ENCODE measurements at regions of chr3 and their contacts with region 1.

Region 1: DNA sequence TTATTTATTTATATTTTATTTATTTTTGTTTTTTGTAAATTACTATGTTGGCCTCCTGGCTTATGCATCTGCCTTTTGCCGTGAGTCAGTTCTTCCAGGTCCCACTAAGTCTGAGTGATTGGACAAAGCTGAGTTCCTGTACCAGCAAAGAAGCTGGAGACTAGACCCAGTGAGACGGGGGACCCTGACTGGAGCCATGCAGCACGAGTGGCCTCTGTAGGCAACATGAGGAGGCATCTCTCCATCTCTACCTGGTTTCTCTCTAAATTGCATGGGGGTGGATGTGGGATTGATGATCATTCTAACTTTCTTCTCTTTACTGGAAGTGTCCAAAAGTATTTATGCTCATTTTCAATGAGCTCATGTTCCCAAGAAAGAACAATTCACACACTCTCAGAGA is 155.3 kb upstream of the MRPL3 start:
- DNase-seq: no peak
- ATAC-seq: no peak
- H3K4me3 ChIP-seq: no peak overlapping the region
- H3K27ac ChIP-seq: no peak overlapping the region
- H3K4me1 ChIP-seq: no peaks in the 10 kb centered on the region
- H3K27me3 ChIP-seq: no peaks in the 10 kb centered on the region

Region 2: GRCh38 chr3:131582438-131582837 is 75.7 kb before region 1 on chr3:
- intact Hi-C with region 1: no loop called
- DNase-seq: no peak
- ATAC-seq: no peak
- H3K4me3 ChIP-seq: no peak overlapping the region
- H3K27ac ChIP-seq: no peak overlapping the region
- H3K4me1 ChIP-seq: no peaks in the 10 kb centered on the region
- H3K27me3 ChIP-seq: no peaks in the 10 kb centered on the region

Region 3: DNA sequence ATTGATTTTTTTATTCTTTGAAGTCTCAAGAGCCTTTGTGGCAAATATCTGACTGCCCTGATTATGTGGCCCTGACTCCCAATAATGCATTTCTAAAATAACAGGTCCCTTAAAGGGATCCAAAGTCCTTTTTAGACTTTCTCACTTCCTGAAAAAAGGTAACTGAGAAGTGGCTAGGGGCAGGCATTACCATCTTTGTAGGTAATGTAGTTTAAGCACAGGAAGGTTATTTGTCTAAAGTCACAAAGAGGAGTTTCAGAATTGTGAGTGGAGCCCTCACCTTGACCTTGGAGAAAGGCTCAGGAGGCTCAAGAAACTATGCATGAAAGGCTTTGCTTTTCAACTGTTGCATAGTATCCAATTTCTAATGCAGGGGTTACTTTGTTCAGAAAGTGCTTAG is 12.5 kb before region 1 on chr3:
- intact Hi-C with region 1: loop called in 1 of 2 experiments (anchors 2 kb)
- DNase-seq: no peak
- ATAC-seq: no peak
- H3K4me3 ChIP-seq: no peak overlapping the region
- H3K27ac ChIP-seq: no peak overlapping the region
- H3K4me1 ChIP-seq: no peaks in the 10 kb centered on the region
- H3K27me3 ChIP-seq: no peaks in the 10 kb centered on the region

Region 4: DNA sequence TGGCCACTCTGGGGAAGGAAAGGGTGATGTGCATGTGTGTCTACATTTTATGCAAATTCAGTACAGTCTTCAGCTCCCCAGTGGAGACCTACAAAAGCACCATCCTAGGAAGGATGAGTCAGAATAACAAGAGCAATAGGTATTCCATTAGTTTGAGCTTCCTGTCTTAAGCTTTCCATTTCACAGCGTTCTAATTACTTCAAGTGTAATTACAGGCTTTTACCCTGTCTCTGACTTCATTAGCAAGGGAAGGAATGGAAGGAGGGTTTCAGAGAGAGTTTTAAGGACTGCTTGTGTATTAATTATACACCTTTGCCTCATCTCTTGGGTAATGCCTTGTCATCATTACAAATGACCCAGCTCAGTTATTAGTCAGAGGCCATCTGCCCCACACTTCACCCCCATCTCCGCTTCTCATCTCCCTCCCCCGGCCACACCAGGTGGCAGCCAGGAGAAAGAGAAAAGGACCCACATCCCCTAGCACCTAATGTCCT is 47.5 kb after region 1 on chr3:
- intact Hi-C with region 1: no loop called
- DNase-seq: no peak
- ATAC-seq: no peak
- H3K4me3 ChIP-seq: no peak overlapping the region
- H3K27ac ChIP-seq: no peak overlapping the region
- H3K4me1 ChIP-seq: no peaks in the 10 kb centered on the region
- H3K27me3 ChIP-seq: no peaks in the 10 kb centered on the region

Measured in aorta (tissue), 5 donors.